ENCODE measurements at regions of chr9 and their contacts with region 1.

Region 1: DNA sequence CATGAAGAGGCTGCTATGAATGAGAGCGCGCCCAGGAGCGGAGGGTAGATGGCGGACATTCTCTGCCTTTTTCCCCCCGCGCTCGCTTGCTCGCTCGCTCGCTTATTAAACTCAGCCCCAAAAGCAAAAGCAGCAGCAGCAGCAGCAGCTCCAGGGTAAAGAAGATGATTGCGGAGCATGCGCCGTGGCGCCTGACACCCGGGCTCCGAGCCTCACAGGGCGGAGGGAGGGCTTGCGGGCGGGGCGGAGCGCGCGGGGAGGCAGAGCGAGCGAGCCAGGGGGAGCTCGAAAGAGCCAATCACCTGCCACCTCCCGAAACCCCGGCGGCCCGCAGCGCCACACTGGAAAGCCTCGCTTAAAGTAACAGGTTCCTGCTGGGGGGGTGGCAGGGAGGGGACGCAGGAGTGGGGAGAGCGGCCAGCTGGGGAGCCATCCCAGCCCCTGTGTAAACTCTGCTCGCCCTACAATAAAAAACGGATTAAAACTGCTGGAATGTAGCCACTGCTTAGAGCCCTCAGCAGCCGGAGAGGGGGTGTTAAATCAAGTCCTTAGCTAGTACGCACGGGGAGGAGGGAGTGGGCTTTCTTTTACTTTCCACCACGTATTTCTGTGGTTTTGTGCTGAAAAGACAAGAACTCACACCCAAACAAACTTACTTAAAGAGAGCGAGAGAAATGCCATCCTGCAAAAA is at the start of gene MLLT3:
- DNase-seq: peak; percentile 97
- H3K4me3 ChIP-seq: peak within 1 kb of the TSS; percentile 77 to 96 (median 92)
- H3K27ac ChIP-seq: peak within 1 kb of the TSS; percentile 91 to 94 (median 92)
- H3K4me1 ChIP-seq: peaks cover 18 to 45% (median 36%) of the 10 kb centered on the region in 4 donors
- H3K27me3 ChIP-seq: no peaks in the 10 kb centered on the region
- CTCF ChIP-seq: peak in 1 of 3 experiments; percentile 37
- EP300 ChIP-seq: no peak
- POLR2A ChIP-seq: peak; percentile 3
- total RNA-seq, gene MLLT3: 14.1 to 30.7 (median 18.0) TPM

Region 2: DNA sequence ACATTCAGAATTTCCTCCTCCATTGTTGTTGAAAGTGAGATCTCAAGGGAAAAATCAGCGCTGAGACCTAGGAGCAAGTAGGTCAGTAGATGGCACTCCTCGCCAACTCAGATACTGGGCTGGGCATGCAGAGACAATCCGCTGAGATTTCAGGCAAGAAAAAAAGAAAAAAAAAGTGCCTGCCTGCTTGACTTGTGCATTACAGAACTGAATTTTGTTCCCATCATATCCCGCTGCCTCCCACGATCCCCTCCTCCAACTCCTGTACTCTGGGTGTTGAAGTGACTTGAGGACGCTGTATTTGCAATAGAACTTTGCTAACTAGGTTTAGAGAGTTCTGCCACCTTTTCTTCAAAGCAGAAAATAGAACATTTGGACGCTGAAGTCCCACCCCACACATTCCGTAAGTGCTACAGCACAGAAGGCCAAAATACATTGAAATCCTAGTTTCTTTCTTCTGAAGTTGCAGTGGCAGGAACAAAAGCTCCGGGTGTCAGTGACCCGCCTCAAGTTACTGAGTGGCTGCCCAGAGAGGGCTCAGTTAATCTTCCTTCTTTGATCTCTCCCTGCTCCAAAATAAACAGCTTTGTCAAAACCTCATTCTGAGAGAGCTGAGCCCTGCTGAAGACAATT is 266.0 kb before region 1 on chr9:
- intact Hi-C with region 1: loop called (anchors 1 kb)
- DNase-seq: no peak
- H3K4me3 ChIP-seq: peak overlapping the region; percentile 28 to 36 (median 36)
- H3K27ac ChIP-seq: peak overlapping the region; percentile 58 to 72 (median 66)
- H3K4me1 ChIP-seq: peaks cover 18 to 37% (median 29%) of the 10 kb centered on the region in 4 donors
- H3K27me3 ChIP-seq: no peaks in the 10 kb centered on the region
- CTCF ChIP-seq: peak; percentile 69 to 72 (median 70)
- EP300 ChIP-seq: no peak
- POLR2A ChIP-seq: no peak

Region 3: GRCh38 chr9:20684035-20684872 is 61.8 kb after region 1 on chr9 and contains the start of gene FOCAD:
- intact Hi-C with region 1: loop called (anchors 2 kb)
- DNase-seq: peak; percentile 98
- H3K4me3 ChIP-seq: peak within 1 kb of the TSS; percentile 77 to 94 (median 92)
- H3K27ac ChIP-seq: peak within 1 kb of the TSS; percentile 92 to 97 (median 96)
- H3K4me1 ChIP-seq: peaks cover 14 to 36% (median 28%) of the 10 kb centered on the region in 4 donors
- H3K27me3 ChIP-seq: no peaks in the 10 kb centered on the region
- CTCF ChIP-seq: peak in 1 of 3 experiments; percentile 8
- EP300 ChIP-seq: no peak
- POLR2A ChIP-seq: peak; percentile 88
- total RNA-seq, gene FOCAD: 17.6 to 27.2 (median 20.1) TPM

Region 4: DNA sequence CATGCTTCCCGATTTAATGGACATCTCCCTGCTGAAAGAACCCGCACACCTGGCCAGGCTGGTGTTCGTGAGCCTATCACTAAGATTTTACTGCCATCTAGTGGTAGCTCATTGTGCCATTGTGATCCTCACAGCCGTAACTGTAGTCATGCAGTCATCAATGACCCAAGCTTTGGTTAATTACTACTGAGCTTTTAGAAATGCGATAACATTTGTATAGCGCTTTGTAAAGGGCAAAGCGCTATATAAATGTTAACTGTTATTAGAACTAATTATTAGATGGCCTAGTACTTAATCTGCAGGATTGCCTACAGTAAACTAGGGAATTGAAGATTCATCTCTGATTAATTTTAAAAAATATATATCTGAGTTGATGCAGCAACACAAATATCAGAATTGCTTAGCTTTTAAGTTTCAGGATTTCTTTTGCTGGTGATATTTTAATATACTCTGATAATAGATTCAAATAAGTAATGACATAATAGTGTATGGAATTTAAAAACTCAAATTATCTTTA is 318.8 kb after region 1 on chr9:
- intact Hi-C with region 1: loop called (anchors 5 kb)
- DNase-seq: no peak
- H3K4me3 ChIP-seq: no peak overlapping the region
- H3K27ac ChIP-seq: no peak overlapping the region
- H3K4me1 ChIP-seq: peaks cover 0 to 12% (median 10%) of the 10 kb centered on the region in 4 donors
- H3K27me3 ChIP-seq: no peaks in the 10 kb centered on the region
- CTCF ChIP-seq: peak; percentile 76 to 82 (median 78)
- EP300 ChIP-seq: no peak
- POLR2A ChIP-seq: no peak